Right cardiac atrium (tissue), 5 donors: ENCODE measurements at regions of chr14 and their contacts with region 1.

Region 1: GRCh38 chr14:71138448-71139293 is 231.4 kb downstream of the PCNX1 start:
- DNase-seq: peak; percentile 37 to 73 (median 69)
- ATAC-seq: peak; percentile 81 to 86
- H3K4me3 ChIP-seq: no peak overlapping the region
- H3K27ac ChIP-seq: no peak overlapping the region
- H3K4me1 ChIP-seq: no peaks in the 10 kb centered on the region
- H3K27me3 ChIP-seq: no peaks in the 10 kb centered on the region

Region 2: GRCh38 chr14:70947711-70948110 is 191.0 kb before region 1 on chr14:
- intact Hi-C with region 1: no loop called
- DNase-seq: no peak
- ATAC-seq: no peak
- H3K4me3 ChIP-seq: no peak overlapping the region
- H3K27ac ChIP-seq: no peak overlapping the region
- H3K4me1 ChIP-seq: peaks cover 2% of the 10 kb centered on the region
- H3K27me3 ChIP-seq: no peaks in the 10 kb centered on the region

Region 3: DNA sequence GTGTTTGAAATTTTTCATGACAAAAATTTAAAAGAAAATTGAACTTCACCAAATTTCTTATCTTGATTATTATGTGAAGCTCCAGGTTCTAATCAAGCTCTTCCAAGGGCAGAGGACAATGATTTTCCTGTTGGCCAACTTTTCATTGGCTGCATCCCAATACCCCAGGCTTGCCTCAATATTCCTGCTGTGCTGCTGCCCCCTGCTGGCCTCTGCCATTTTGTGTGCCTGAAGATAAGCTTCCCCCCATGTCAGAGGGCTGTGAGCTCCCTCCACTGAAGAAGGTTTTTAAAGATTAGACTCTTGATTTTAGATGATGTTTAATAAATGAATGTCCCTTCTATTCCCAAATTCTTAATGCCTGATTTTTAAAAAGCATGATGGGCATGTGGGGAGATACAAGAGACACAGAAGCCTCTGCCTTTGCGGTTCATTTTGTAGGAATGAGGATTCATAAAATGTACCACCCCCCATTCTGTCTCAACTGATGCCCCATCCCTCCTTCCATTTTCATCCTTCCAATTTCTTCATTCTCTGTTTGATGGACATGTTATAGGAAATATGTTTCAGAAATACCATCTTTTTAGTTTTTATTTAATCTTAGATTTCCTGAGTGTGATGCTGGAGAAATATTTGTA is 716.8 kb after region 1 on chr14:
- intact Hi-C with region 1: loop called in 1 of 4 experiments (anchors 10 kb)
- DNase-seq: peak; percentile 73 to 86 (median 83)
- ATAC-seq: peak; percentile 22 to 67
- H3K4me3 ChIP-seq: no peak overlapping the region
- H3K27ac ChIP-seq: no peak overlapping the region
- H3K4me1 ChIP-seq: no peaks in the 10 kb centered on the region
- H3K27me3 ChIP-seq: no peaks in the 10 kb centered on the region